ENCODE measurements at regions of chr3 and their contacts with region 1.

Region 1: GRCh38 chr3:141452036-141452435 is 34.8 kb upstream of the RASA2 start:
- DNase-seq: no peak
- H3K4me3 Mint-ChIP-seq: no peak overlapping the region
- H3K27ac Mint-ChIP-seq: no peak overlapping the region
- H3K4me1 Mint-ChIP-seq: peaks cover 16% of the 10 kb centered on the region
- H3K27me3 Mint-ChIP-seq: no peaks in the 10 kb centered on the region

Region 2: DNA sequence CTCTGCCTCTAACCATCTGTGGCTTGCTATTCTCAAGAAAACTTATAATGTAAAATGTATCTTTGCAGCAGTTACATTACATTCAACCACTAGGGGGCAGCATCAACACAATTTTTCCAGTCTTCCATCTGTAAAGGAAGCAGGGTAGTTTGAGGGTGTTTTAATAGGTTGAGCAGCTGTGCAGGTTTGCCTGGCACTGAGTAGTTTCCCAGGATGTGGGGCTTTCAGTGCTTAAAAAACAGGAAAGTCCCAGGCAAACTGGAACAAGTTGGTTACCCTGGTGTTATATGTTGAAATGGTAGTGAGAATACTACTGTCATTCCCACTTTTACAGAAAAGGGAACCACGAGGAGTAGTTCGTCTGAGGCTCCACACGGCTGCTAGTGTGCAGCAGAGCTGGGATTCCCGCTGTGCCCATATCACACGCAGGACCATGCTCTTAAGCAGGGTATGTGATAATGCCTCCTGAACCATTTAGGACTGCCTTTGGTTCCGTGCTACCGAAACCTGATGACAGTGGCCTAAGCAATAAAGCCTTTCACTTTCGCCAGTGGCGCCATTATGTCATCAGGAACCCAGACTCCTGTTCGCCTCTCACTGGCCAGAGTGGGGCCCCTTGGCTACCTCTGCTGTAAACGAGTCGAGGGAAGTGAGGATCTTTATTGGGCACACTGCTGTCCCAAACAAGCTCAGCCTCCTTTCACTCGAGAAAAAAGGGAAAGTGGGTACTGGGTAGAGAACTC is 148.4 kb before region 1 on chr3:
- intact Hi-C with region 1: loop called (anchors 2 kb)
- DNase-seq: peak; percentile 49
- H3K4me3 Mint-ChIP-seq: no peak overlapping the region
- H3K27ac Mint-ChIP-seq: no peak overlapping the region
- H3K4me1 Mint-ChIP-seq: peaks cover 42% of the 10 kb centered on the region
- H3K27me3 Mint-ChIP-seq: no peaks in the 10 kb centered on the region

Measured in activated T-helper 2 cell treated with anti-CD3 and anti-CD28 coated beads, Interferon-gamma antibody, Interleukin-2, Interleukin-4, amounts not matched to agents 10 μg/mL and 5 μg/mL and 100 μg/mL, durations not matched to agents 14 hours and 24 hours and 36 hours (primary cell).